ENCODE measurements at regions of chr1 and their contacts with region 1.

Region 1: DNA sequence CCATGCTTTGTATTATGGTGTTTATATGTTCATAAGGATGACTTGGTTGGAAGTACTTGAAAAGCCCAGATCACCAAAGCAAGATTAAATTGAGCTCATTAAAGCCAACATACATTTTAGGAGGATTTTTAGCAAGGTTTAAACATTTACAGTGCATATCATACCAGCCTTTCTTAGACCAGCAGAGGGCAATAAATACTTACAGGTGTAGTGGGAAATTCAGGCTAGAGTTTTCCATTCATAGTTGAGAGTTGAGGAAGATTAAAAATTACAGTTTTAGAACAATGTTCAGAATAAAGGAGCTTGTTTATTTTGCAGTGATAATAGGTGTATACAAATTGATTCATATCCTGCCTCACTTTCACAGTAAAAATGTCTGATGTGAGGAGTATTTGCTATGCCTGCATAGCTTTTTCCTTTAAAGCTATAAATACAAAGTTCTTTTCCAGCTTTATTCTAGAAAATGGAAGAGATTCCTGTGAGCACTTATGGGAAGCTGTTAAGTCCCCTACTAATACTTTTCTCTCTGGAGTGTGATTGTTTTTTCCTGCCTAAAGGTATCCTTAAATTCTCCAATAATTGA is 35.3 kb downstream of the DTL start:
- DNase-seq: no peak
- ATAC-seq: peak; percentile 63
- H3K4me3 ChIP-seq: no peak overlapping the region
- H3K27ac ChIP-seq: no peak overlapping the region
- H3K4me1 ChIP-seq: no peaks in the 10 kb centered on the region
- H3K27me3 ChIP-seq: no peaks in the 10 kb centered on the region
- CTCF ChIP-seq: peak; percentile 51 to 72 (median 54); a peak in 5 of 6 replicates
- EP300 ChIP-seq: no peak
- POLR2A ChIP-seq: no peak
- RAD21 ChIP-seq: peak; percentile 95

Region 2: GRCh38 chr1:211735208-211736170 is 335.3 kb before region 1 on chr1:
- CTCF ChIA-PET with region 1: no interaction called
- POLR2A ChIA-PET with region 1: no interaction called
- RAD21 ChIA-PET with region 1: no interaction called
- SMC1A ChIA-PET with region 1: no interaction called
- in situ Hi-C with region 1: no loop called
- intact Hi-C with region 1: no loop called
- DNase-seq: no peak
- ATAC-seq: no peak
- H3K4me3 ChIP-seq: no peak overlapping the region
- H3K27ac ChIP-seq: no peak overlapping the region
- H3K4me1 ChIP-seq: peaks cover 30% of the 10 kb centered on the region
- H3K27me3 ChIP-seq: no peaks in the 10 kb centered on the region
- CTCF ChIP-seq: no peak
- EP300 ChIP-seq: no peak
- POLR2A ChIP-seq: no peak
- RAD21 ChIP-seq: no peak

Region 3: GRCh38 chr1:212035123-212035834 is 35.5 kb before region 1 on chr1 and contains the starts of genes DTL and INTS7:
- CTCF ChIA-PET with region 1: interaction called, 21 read pairs
- POLR2A ChIA-PET with region 1: interaction called, 4 read pairs
- RAD21 ChIA-PET with region 1: interaction called, 7 read pairs
- SMC1A ChIA-PET with region 1: interaction called, 14 read pairs
- in situ Hi-C with region 1: no loop called
- intact Hi-C with region 1: no loop called
- DNase-seq: peak; percentile 96
- ATAC-seq: peak; percentile 77
- H3K4me3 ChIP-seq: peak within 1 kb of the TSS; percentile 90
- H3K27ac ChIP-seq: peak within 1 kb of the TSS; percentile 98
- H3K4me1 ChIP-seq: peaks cover 17% of the 10 kb centered on the region
- H3K27me3 ChIP-seq: no peaks in the 10 kb centered on the region
- CTCF ChIP-seq: peak; percentile 82 to 97 (median 83)
- EP300 ChIP-seq: no peak
- POLR2A ChIP-seq: peak; percentile 89
- RAD21 ChIP-seq: no peak
- polyA plus RNA-seq, gene DTL: 24.1 to 24.6 TPM
- polyA plus RNA-seq, gene INTS7: 17.1 to 20.1 TPM

Region 4: DNA sequence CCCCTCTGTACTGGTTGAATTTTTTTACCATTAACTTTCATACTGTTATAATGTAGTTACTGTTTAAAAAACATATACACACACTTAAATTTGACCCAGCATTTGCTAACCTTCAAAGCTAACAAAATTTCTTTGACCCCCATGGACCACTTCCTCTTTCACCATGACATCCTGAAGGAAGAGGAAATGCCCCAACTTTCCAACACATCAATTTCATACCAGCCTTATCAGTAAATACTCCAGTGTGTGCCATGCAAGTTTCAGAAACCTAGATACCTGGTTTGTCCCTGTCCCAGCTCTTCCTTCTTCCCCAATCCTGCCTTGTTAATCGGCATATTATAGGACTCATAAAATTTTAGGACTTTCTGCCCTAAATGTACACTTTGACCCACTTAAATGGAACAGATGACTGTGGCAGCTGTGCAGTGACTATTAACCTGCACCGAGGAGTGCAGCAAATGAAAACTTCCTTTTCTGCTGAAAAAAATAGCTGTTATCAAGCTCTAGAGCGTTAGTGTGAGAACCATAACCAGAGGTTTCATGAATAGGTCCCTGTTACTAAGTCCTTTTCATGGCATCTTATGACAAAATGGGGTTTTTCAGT is 18.9 kb after region 1 on chr1:
- CTCF ChIA-PET with region 1: interaction called, 4 read pairs
- POLR2A ChIA-PET with region 1: no interaction called
- RAD21 ChIA-PET with region 1: interaction called, 15 read pairs
- SMC1A ChIA-PET with region 1: interaction called, 14 read pairs
- in situ Hi-C with region 1: no loop called
- intact Hi-C with region 1: no loop called
- DNase-seq: no peak
- ATAC-seq: peak; percentile 68
- H3K4me3 ChIP-seq: no peak overlapping the region
- H3K27ac ChIP-seq: peak overlapping the region; percentile 22; the same call in 1 of the 2 replicates
- H3K4me1 ChIP-seq: peaks cover 3% of the 10 kb centered on the region; the same call in 1 of the 2 replicates
- H3K27me3 ChIP-seq: no peaks in the 10 kb centered on the region
- CTCF ChIP-seq: no peak
- EP300 ChIP-seq: peak in 1 of 2 experiments; percentile 53; a peak in 1 of 4 replicates
- POLR2A ChIP-seq: no peak
- RAD21 ChIP-seq: no peak

Region 5: DNA sequence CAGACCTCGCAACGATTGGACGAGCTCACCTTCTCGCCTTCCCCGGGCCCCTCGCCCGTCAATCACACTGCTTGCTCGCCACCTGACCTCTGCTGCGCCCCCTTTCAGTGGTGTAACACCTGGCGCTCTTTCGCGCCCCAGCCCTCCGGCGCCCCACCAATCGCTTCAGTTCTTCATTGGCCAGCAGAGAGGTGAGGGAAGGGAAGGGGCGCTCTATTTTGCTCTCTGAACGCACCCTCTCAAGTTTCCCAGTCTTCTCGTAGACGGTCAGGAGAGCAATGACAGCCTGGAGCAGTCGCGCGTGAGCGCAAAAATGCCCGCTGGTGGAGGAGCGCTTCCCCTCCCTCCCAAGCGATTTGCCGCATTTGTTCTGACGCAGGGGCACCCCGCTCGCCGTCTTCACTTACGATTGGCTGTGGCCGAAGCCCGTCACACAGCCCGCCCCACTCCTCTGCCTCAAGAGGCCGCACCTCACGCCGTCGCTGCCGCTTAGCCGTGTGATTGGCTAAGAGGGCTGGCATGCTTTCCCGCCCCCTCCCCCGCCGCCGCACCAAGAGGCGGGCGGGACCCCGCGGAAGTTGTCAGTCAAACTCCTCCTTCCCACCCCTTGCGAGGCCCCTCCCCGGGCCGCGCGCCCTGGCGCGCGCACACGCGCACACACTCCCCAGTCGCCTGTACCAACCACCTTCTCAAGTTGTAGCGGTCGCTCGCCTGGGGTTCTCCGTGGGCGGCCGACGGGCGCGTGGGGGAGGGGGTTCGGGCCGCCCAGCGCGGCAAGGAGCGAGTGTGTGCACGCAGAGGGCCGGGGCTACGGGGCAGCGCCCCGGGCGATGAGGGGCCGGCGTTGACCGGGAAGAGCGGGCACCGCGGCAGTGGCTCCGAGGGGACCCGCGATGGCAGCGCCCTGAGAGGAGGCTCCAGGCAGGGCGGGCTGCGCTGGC is 214.2 kb after region 1 on chr1 and contains the start of gene PPP2R5A:
- CTCF ChIA-PET with region 1: interaction called, 122 read pairs
- POLR2A ChIA-PET with region 1: interaction called, 3 read pairs
- RAD21 ChIA-PET with region 1: interaction called, 75 read pairs
- SMC1A ChIA-PET with region 1: interaction called, 130 read pairs
- in situ Hi-C with region 1: no loop called
- intact Hi-C with region 1: no loop called
- DNase-seq: peak; percentile 97
- ATAC-seq: peak; percentile 94
- H3K4me3 ChIP-seq: peak within 1 kb of the TSS; percentile 88
- H3K27ac ChIP-seq: peak within 1 kb of the TSS; percentile 79
- H3K4me1 ChIP-seq: peaks cover 7% of the 10 kb centered on the region
- H3K27me3 ChIP-seq: no peaks in the 10 kb centered on the region
- CTCF ChIP-seq: peak; percentile 9 to 40 (median 27); a peak in 5 of 6 replicates
- EP300 ChIP-seq: no peak
- POLR2A ChIP-seq: peak; percentile 77
- RAD21 ChIP-seq: no peak
- polyA plus RNA-seq, gene PPP2R5A: 15.4 to 18.2 TPM

Region 6: DNA sequence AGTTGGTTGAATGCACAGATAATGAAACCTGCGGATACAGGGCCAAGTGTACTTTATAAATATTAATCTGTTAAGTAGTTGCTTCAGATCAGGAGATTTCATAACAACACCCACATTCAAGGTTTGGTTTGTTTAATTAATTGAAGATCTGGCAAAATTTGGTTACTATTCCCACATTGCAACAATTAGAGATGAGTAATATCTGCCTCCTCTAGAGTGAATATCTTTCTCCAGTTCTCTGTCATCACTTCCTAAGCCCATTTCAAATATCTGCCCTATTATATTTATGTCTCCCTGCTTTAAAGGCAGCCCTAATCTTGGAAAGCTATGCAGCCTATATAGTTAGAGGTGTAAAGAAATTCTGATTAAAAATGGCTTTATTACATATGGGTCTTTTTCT is 275.8 kb after region 1 on chr1:
- CTCF ChIA-PET with region 1: interaction called, 13 read pairs
- POLR2A ChIA-PET with region 1: no interaction called
- RAD21 ChIA-PET with region 1: interaction called, 5 read pairs
- SMC1A ChIA-PET with region 1: interaction called, 5 read pairs
- in situ Hi-C with region 1: no loop called
- intact Hi-C with region 1: no loop called
- DNase-seq: no peak
- ATAC-seq: no peak
- H3K4me3 ChIP-seq: no peak overlapping the region
- H3K27ac ChIP-seq: no peak overlapping the region
- H3K4me1 ChIP-seq: no peaks in the 10 kb centered on the region
- H3K27me3 ChIP-seq: no peaks in the 10 kb centered on the region
- CTCF ChIP-seq: no peak
- EP300 ChIP-seq: no peak
- POLR2A ChIP-seq: no peak
- RAD21 ChIP-seq: no peak

Region 7: DNA sequence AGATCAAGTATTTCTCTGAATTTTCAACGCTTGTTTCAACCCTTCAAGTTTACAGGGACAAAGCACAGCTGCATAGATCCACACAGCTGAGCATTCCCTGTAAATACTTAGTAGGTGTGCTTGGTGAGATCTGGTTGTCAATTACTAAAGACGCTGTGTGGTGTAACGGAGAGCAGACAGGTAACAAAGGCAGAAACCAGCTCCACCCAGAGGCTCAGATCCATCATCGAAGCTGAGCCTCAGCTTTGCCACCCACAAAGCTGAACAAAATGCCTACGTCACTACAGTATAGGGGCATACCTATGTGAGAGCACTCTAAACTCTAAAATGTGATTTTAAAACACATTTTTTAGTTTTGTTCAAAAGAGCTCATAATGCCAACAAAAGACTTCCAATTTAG is 305.2 kb after region 1 on chr1:
- CTCF ChIA-PET with region 1: interaction called, 12 read pairs
- POLR2A ChIA-PET with region 1: no interaction called
- RAD21 ChIA-PET with region 1: interaction called, 5 read pairs
- SMC1A ChIA-PET with region 1: interaction called, 3 read pairs
- in situ Hi-C with region 1: no loop called
- intact Hi-C with region 1: no loop called
- DNase-seq: no peak
- ATAC-seq: no peak
- H3K4me3 ChIP-seq: no peak overlapping the region
- H3K27ac ChIP-seq: no peak overlapping the region
- H3K4me1 ChIP-seq: no peaks in the 10 kb centered on the region
- H3K27me3 ChIP-seq: no peaks in the 10 kb centered on the region
- CTCF ChIP-seq: no peak
- EP300 ChIP-seq: no peak
- POLR2A ChIP-seq: no peak
- RAD21 ChIP-seq: no peak